ENCODE measurements at regions of chr1 and their contacts with region 1.

Region 1: DNA sequence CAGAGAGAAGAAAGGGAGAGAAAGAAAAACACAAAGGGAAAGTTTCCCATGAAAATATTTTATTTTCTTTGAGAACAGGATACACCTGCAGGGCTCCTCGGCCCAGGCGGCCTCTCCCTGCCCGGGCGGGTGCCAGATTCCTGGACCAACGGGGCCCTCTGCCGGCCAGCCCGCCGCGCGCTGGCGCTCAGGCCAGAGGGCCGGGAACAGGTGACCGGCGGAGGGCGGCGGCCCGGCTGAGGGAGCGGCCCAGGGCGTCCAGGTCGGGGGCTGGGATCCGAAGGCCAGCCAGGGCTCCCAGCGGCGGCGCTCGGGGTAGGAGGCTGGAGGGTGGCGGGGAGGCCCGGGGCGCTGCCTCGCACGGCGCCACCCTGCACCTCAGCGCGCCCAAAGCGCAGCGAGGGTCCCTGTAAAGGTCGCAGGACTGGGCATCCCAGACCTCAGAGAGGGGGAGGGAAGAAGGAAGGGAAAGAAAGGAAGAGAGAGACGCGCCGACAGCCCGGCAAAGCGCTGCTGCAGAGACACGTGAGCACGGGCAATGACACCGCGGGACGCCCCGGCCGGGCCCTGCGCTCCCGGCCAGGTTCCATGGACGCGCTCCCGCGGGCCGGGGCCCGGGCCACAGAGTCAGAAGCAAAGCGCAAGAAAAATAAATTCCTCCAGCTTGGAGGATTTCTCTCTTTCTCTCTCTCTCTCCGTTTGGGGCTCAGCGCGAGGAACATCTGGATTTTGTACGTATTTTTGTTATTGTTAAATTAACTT is 927 bp downstream of the WNT9A start:
- DNase-seq: peak; percentile 45
- H3K4me3 ChIP-seq: peak overlapping the region; percentile 52
- H3K27ac ChIP-seq: no peak overlapping the region
- H3K4me1 ChIP-seq: peaks cover 6% of the 10 kb centered on the region
- H3K27me3 ChIP-seq: peaks cover 27% of the 10 kb centered on the region
- CTCF ChIP-seq: peak; percentile 59

Region 2: GRCh38 chr1:227306689-227307088 is 640.1 kb before region 1 on chr1:
- CTCF ChIA-PET with region 1: no interaction called
- POLR2A ChIA-PET with region 1: interaction called, 11 read pairs
- intact Hi-C with region 1: no loop called
- DNase-seq: no peak
- H3K4me3 ChIP-seq: no peak overlapping the region
- H3K27ac ChIP-seq: no peak overlapping the region
- H3K4me1 ChIP-seq: no peaks in the 10 kb centered on the region
- H3K27me3 ChIP-seq: no peaks in the 10 kb centered on the region
- CTCF ChIP-seq: no peak

Region 3: DNA sequence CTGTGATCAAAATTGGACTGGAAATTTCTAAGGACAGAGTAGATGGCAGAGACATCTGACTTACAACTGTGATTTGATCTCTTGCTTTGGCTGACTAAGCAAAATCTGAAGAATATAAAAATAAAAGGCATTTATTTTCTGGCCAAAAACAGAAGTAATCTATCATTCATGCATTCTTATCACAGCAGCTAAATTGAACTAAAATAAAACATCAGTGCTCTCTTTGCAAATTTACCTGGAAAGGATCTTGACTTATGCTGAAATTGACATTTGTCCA is 464.8 kb before region 1 on chr1:
- CTCF ChIA-PET with region 1: no interaction called
- POLR2A ChIA-PET with region 1: no interaction called
- intact Hi-C with region 1: loop called (anchors 5 kb)
- DNase-seq: no peak
- H3K4me3 ChIP-seq: no peak overlapping the region
- H3K27ac ChIP-seq: no peak overlapping the region
- H3K4me1 ChIP-seq: no peaks in the 10 kb centered on the region
- H3K27me3 ChIP-seq: peaks cover 12% of the 10 kb centered on the region
- CTCF ChIP-seq: no peak

Region 4: GRCh38 chr1:227762233-227762911 is 184.4 kb before region 1 on chr1:
- CTCF ChIA-PET with region 1: interaction called, 3 read pairs
- POLR2A ChIA-PET with region 1: no interaction called
- intact Hi-C with region 1: loop called (anchors 2 kb)
- DNase-seq: peak; percentile 93
- H3K4me3 ChIP-seq: no peak overlapping the region
- H3K27ac ChIP-seq: no peak overlapping the region
- H3K4me1 ChIP-seq: peaks cover 10% of the 10 kb centered on the region
- H3K27me3 ChIP-seq: no peaks in the 10 kb centered on the region
- CTCF ChIP-seq: peak; percentile 98

Region 5: DNA sequence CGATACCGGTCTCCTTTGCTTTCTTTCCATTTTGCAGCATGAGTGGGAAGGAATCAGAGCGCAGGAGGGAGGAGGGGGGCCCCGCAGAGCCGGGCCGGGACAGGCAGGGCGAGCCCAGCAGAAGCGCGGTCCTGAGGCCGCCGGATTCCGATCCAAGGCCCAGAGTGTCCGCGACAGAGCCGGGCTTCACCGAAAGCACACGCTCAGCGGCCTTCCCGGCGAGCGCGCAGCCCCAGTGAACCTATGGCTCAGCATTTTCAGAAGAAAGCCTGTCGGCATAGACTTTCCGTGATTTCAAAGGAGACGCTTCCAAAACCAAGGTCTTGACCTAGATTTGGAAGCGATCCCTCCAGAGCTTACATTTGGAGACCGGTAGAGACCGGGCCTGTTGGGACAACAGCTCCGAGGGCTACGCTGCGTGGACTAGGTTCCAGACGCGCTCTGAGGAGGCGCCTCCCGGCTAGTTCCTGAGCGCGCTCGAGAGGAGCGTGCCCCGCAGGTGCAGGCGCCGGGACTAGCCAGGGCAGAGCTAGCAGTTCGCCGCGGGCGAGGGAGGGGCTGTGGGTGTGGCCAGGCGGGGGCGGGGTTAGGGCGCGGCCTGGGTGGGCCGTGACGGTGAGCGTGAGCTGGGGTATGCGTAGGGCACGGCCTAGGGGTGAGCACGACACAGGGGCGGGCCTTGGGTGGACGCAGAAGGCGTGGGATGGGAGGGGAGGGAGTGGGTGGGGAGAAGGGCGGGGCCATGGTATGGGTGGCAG is 159.1 kb before region 1 on chr1:
- CTCF ChIA-PET with region 1: interaction called, 14 read pairs
- POLR2A ChIA-PET with region 1: no interaction called
- intact Hi-C with region 1: no loop called
- DNase-seq: peak; percentile 94
- H3K4me3 ChIP-seq: peak overlapping the region; percentile 56
- H3K27ac ChIP-seq: no peak overlapping the region
- H3K4me1 ChIP-seq: peaks cover 11% of the 10 kb centered on the region
- H3K27me3 ChIP-seq: no peaks in the 10 kb centered on the region
- CTCF ChIP-seq: no peak